IMR-90 (cell line): ENCODE measurements at regions of chr17 and their contacts with region 1.

Region 1: GRCh38 chr17:5203908-5204294 is 12.2 kb upstream of the ZNF594 start:
- DNase-seq: peak; percentile 79
- ATAC-seq: peak; percentile 65
- H3K4me3 ChIP-seq: no peak overlapping the region
- H3K27ac ChIP-seq: no peak overlapping the region
- H3K4me1 ChIP-seq: peaks cover 4% of the 10 kb centered on the region; the same call in 1 of the 2 replicates
- H3K27me3 ChIP-seq: no peaks in the 10 kb centered on the region
- CTCF ChIP-seq: no peak
- POLR2A ChIP-seq: no peak
- RAD21 ChIP-seq: no peak

Region 2: GRCh38 chr17:5272322-5272721 is 68.4 kb after region 1 on chr17:
- CTCF ChIA-PET with region 1: no interaction called
- POLR2A ChIA-PET with region 1: no interaction called
- dilution Hi-C with region 1: no loop called
- in situ Hi-C with region 1: no loop called
- intact Hi-C with region 1: loop called (anchors 10 kb)
- DNase-seq: no peak
- ATAC-seq: no peak
- H3K4me3 ChIP-seq: no peak overlapping the region
- H3K27ac ChIP-seq: no peak overlapping the region
- H3K4me1 ChIP-seq: no peaks in the 10 kb centered on the region
- H3K27me3 ChIP-seq: no peaks in the 10 kb centered on the region; the same call in 1 of the 2 replicates
- CTCF ChIP-seq: no peak
- POLR2A ChIP-seq: no peak
- RAD21 ChIP-seq: no peak

Region 3: GRCh38 chr17:5309851-5310250 is 106.0 kb after region 1 on chr17:
- CTCF ChIA-PET with region 1: no interaction called
- POLR2A ChIA-PET with region 1: no interaction called
- dilution Hi-C with region 1: no loop called
- in situ Hi-C with region 1: no loop called
- intact Hi-C with region 1: no loop called
- DNase-seq: no peak
- ATAC-seq: no peak
- H3K4me3 ChIP-seq: no peak overlapping the region
- H3K27ac ChIP-seq: no peak overlapping the region
- H3K4me1 ChIP-seq: 0 out of 2 replicates have a peak, but pooled peaks cover 2% of the 10 kb centered on the region
- H3K27me3 ChIP-seq: no peaks in the 10 kb centered on the region
- CTCF ChIP-seq: no peak
- POLR2A ChIP-seq: no peak
- RAD21 ChIP-seq: no peak